CD4-positive, alpha-beta T cell (primary cell): ENCODE measurements at regions of chr18 and their contacts with region 1.

Region 1: GRCh38 chr18:11553098-11553940 is 56.1 kb upstream of the SLC35G4 start:
- DNase-seq: peak in 5 of 14 experiments; percentile 6 to 66 (median 44)
- ATAC-seq: peak; percentile 26
- H3K4me3 ChIP-seq: no peak overlapping the region
- H3K4me3 Mint-ChIP-seq: no peak overlapping the region
- H3K27ac ChIP-seq: no peak overlapping the region
- H3K27ac Mint-ChIP-seq: no peak overlapping the region
- H3K4me1 ChIP-seq: no peaks in the 10 kb centered on the region
- H3K4me1 Mint-ChIP-seq: peaks cover 3% of the 10 kb centered on the region
- H3K27me3 ChIP-seq: peaks cover 0 to 3% of the 10 kb centered on the region in 2 experiments
- H3K27me3 Mint-ChIP-seq: peaks cover 5% of the 10 kb centered on the region
- CTCF ChIP-seq: peak; percentile 91

Region 2: GRCh38 chr18:10560450-10561045 is 992.8 kb before region 1 on chr18:
- CTCF ChIA-PET with region 1: interaction called, 4 read pairs
- POLR2A ChIA-PET with region 1: no interaction called
- intact Hi-C with region 1: loop called in 1 of 2 experiments (anchors 2 kb)
- DNase-seq: peak; percentile 23 to 70 (median 49)
- ATAC-seq: peak; percentile 71
- H3K4me3 ChIP-seq: peak overlapping the region; percentile 21
- H3K4me3 Mint-ChIP-seq: no peak overlapping the region
- H3K27ac ChIP-seq: no peak overlapping the region
- H3K27ac Mint-ChIP-seq: no peak overlapping the region
- H3K4me1 ChIP-seq: peaks cover 11% of the 10 kb centered on the region
- H3K4me1 Mint-ChIP-seq: peaks cover 10% of the 10 kb centered on the region
- H3K27me3 ChIP-seq: no peaks in the 10 kb centered on the region
- H3K27me3 Mint-ChIP-seq: no peaks in the 10 kb centered on the region
- CTCF ChIP-seq: peak; percentile 78

Region 3: GRCh38 chr18:10851824-10852319 is 701.4 kb before region 1 on chr18:
- CTCF ChIA-PET with region 1: interaction called, 3 read pairs
- POLR2A ChIA-PET with region 1: no interaction called
- intact Hi-C with region 1: loop called in 1 of 2 experiments (anchors 5 kb)
- DNase-seq: peak in 3 of 14 experiments; percentile 25 to 39 (median 28)
- ATAC-seq: no peak
- H3K4me3 ChIP-seq: no peak overlapping the region
- H3K4me3 Mint-ChIP-seq: no peak overlapping the region
- H3K27ac ChIP-seq: no peak overlapping the region
- H3K27ac Mint-ChIP-seq: no peak overlapping the region
- H3K4me1 ChIP-seq: no peaks in the 10 kb centered on the region
- H3K4me1 Mint-ChIP-seq: no peaks in the 10 kb centered on the region
- H3K27me3 ChIP-seq: peaks cover 0 to 3% of the 10 kb centered on the region in 2 experiments
- H3K27me3 Mint-ChIP-seq: peaks cover 4% of the 10 kb centered on the region
- CTCF ChIP-seq: peak; percentile 74

Region 4: GRCh38 chr18:11600321-11600720 is 47.0 kb after region 1 on chr18:
- CTCF ChIA-PET with region 1: no interaction called
- POLR2A ChIA-PET with region 1: no interaction called
- intact Hi-C with region 1: no loop called
- DNase-seq: no peak
- ATAC-seq: no peak
- H3K4me3 ChIP-seq: no peak overlapping the region
- H3K4me3 Mint-ChIP-seq: no peak overlapping the region
- H3K27ac ChIP-seq: no peak overlapping the region
- H3K27ac Mint-ChIP-seq: no peak overlapping the region
- H3K4me1 ChIP-seq: no peaks in the 10 kb centered on the region
- H3K4me1 Mint-ChIP-seq: no peaks in the 10 kb centered on the region
- H3K27me3 ChIP-seq: no peaks in the 10 kb centered on the region
- H3K27me3 Mint-ChIP-seq: peaks cover 15% of the 10 kb centered on the region
- CTCF ChIP-seq: no peak